Activated naive CD4-positive, alpha-beta T cell treated with anti-CD3 and anti-CD28 coated beads for 36 hours (primary cell): ENCODE measurements at regions of chr11 and their contacts with region 1.

Region 1: GRCh38 chr11:134139873-134140331 is 71.0 kb downstream of the JAM3 start:
- DNase-seq: peak; percentile 72
- H3K4me3 Mint-ChIP-seq: no peak overlapping the region
- H3K27ac Mint-ChIP-seq: no peak overlapping the region
- H3K4me1 Mint-ChIP-seq: peaks cover 6% of the 10 kb centered on the region
- H3K27me3 Mint-ChIP-seq: no peaks in the 10 kb centered on the region

Region 2: DNA sequence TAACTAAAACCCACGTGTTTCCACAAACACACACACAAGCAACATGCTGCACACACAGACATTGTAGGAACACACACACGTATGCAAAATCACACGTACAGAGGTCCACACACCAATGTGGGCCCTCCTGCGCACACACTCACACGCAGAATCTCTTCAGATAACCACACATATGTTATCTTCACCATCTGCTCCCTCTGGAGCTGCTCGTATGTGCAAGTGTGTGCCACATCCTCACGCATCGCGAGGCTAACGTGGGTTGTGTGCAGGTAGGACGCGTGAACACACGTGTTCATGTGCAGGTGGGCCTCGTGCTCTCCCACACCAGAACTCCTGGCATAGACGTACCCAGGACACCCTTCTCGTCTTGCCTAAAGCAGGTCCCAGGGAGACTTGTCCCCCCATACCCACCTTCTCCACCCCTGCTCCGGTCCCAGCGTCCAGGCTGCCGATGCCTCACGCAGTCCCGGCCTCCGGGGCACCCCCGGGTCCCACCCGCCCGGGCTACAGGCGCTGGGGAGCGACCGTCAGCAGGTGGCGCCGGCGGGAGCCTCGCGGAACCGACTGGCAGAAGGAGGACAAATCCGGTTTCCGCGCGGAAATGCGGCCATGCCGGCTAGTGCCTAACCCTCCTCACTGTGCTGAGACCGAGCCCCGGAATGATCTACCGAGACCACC is 172.8 kb before region 1 on chr11:
- CTCF ChIA-PET with region 1: no interaction called
- intact Hi-C with region 1: loop called (anchors 5 kb)
- DNase-seq: peak; percentile 84
- H3K4me3 Mint-ChIP-seq: peak overlapping the region; percentile 81
- H3K27ac Mint-ChIP-seq: peak overlapping the region; percentile 73
- H3K4me1 Mint-ChIP-seq: peaks cover 9% of the 10 kb centered on the region
- H3K27me3 Mint-ChIP-seq: peaks cover 2% of the 10 kb centered on the region

Region 3: DNA sequence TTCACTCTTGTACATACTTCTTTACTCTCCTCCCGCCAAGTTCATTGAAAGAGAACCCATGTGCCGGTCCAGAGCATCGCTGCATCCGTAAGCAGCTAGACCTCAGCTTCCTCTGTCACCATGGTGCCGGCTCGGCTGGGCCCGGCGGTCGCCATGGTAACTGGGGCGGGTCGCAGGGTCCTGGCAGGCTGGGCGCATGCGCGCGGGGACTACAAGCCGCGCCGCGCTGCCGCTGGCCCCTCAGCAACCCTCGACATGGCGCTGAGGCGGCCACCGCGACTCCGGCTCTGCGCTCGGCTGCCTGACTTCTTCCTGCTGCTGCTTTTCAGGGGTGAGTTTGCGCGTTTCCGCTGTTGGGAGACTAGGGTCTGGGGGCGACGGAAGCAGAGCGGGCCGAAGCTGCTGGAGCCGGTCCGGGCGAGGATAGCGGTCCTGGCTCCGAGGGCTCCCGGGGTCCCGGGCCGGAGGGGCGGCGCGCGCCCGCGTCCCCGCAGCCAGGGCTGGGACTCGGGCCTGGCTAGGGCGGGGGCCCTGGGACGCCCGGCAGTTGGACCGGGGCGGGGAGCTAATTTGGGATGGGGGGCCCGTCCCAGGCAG is 71.0 kb before region 1 on chr11 and contains the start of gene JAM3:
- CTCF ChIA-PET with region 1: no interaction called
- intact Hi-C with region 1: loop called (anchors 5 kb)
- DNase-seq: peak; percentile 94
- H3K4me3 Mint-ChIP-seq: peak within 1 kb of the TSS; percentile 94
- H3K27ac Mint-ChIP-seq: no peak within 1 kb of the TSS
- H3K4me1 Mint-ChIP-seq: peaks cover 11% of the 10 kb centered on the region
- H3K27me3 Mint-ChIP-seq: no peaks in the 10 kb centered on the region
- total RNA-seq, gene JAM3: 4.0 to 6.4 TPM